ENCODE measurements at regions of chr19 and their contacts with region 1.

Region 1: DNA sequence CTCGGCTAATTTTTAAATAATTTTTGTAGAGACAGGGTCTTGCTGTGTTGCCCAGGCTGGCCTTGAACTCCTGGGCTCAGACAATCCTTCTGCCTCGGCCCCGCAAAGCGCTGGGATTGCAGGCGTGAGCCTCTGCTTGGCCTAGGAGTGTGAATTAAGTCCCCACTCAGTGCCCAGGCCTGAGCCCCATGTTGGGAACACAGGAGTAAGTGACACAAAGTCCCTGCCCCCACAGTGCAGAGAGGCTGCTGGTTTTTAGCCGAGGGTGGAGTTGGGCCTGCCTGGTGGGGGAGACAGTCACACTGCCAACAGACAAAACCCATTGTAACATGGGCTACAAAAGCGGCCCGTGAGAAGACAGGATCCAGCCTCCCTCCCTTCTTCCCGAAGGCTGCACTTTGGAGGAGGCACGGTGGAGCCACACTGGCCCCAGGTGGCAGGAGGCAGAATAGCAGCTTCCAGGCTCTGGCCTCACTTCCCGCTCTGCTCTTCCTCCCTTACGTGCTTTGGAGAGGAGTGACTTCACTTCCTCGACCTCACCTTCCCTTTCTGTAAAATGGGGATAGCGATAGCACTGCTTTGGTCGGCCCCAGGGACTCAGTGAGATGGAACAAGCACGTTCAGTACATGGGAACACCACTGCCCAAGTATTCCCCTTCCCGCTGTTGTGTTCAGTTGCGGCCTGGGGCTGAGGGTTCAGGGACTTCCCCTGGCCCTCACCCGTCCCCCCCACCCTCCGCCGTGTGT is 15.2 kb upstream of the EHD2 start:
- DNase-seq: peak; percentile 88
- H3K4me3 Mint-ChIP-seq: no peak overlapping the region
- H3K27ac Mint-ChIP-seq: no peak overlapping the region
- H3K4me1 Mint-ChIP-seq: no peaks in the 10 kb centered on the region
- H3K27me3 Mint-ChIP-seq: no peaks in the 10 kb centered on the region
- CTCF ChIP-seq: peak; percentile 99

Region 2: GRCh38 chr19:47608074-47608918 is 89.7 kb before region 1 on chr19:
- CTCF ChIA-PET with region 1: interaction called, 3 read pairs
- intact Hi-C with region 1: loop called (anchors 2 kb)
- DNase-seq: peak; percentile 99
- H3K4me3 Mint-ChIP-seq: peak overlapping the region; percentile 88
- H3K27ac Mint-ChIP-seq: peak overlapping the region; percentile 70
- H3K4me1 Mint-ChIP-seq: peaks cover 18% of the 10 kb centered on the region
- H3K27me3 Mint-ChIP-seq: peaks cover 11% of the 10 kb centered on the region
- CTCF ChIP-seq: no peak

Region 3: DNA sequence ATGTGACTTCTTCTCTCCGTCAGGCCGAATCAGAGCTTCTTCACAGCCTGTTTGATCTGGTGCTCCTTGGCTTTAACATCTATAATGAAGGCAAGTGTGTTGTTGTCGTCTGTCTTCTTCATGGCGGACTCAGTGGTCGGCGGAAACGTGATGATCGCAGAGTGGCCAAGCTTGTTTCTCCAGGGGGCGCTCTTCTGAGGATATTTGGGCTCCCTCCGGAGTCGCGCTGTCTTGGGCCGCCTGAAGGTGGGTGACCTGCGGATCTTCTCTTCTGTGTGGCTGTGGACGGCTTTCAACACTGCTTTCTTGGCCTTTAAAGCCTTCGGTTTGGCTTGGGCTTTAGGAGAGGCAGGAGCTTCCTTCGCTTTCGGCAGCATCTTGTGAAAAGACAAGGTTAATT is 96.5 kb after region 1 on chr19:
- CTCF ChIA-PET with region 1: no interaction called
- intact Hi-C with region 1: no loop called
- DNase-seq: no peak
- H3K4me3 Mint-ChIP-seq: no peak overlapping the region
- H3K27ac Mint-ChIP-seq: no peak overlapping the region
- H3K4me1 Mint-ChIP-seq: peaks cover 12% of the 10 kb centered on the region
- H3K27me3 Mint-ChIP-seq: peaks cover 22% of the 10 kb centered on the region
- CTCF ChIP-seq: no peak

Measured in Calu3 (cell line).